Naive thymus-derived CD4-positive, alpha-beta T cell (primary cell): ENCODE measurements at regions of chr2 and their contacts with region 1.

Region 1: DNA sequence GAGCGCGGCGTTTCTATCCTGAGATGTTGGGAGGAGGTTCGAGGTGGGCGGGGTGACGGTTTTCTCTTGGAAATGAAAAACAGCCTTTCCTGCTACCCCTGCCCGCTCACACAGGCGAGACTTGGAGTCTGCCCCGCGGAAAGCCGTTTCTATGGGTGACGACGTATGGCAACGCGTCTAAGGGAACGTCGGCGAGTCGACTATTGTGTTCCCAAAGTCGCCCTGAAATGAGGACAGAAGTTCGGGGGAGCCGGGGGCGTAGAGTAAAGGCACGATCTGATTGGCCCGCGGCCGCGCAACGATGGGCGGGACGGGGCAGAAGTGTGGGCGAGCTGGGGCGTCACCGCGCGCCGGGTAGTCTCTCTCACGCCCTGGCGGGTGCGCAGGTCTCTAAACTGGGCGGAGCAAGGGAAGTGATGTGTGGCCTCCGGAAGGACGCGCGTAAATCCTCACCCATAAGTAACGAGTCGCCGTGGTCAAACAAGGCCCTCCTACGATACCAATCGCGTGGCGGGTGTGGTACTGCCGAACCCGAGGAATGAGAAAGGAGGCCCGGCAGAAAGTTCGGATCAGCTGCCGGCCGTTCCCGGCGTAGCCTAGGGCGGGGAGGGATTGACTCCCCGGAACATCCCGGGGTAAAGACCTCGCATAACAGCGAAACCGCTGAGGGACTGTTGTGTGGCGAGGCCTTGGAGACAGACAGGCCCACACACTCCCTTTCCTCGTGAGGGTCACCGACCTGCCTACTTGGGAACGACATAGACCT is 89.6 kb downstream of the FAM161A start:
- DNase-seq: peak; percentile 89 to 98 (median 97)
- ATAC-seq: peak; percentile 99
- H3K4me3 ChIP-seq: peak overlapping the region; percentile 71
- H3K4me3 Mint-ChIP-seq: peak overlapping the region; percentile 80 to 98 (median 95)
- H3K27ac ChIP-seq: peak overlapping the region; percentile 93
- H3K27ac Mint-ChIP-seq: peak overlapping the region; percentile 94 to 99 (median 98)
- H3K4me1 ChIP-seq: peaks cover 6 to 9% of the 10 kb centered on the region in 2 donors
- H3K4me1 Mint-ChIP-seq: peaks cover 0 to 16% (median 10%) of the 10 kb centered on the region in 7 donors
- H3K27me3 ChIP-seq: no peaks in the 10 kb centered on the region
- H3K27me3 Mint-ChIP-seq: peaks cover 0 to under 1% (median 0%) of the 10 kb centered on the region in 5 donors

Region 2: GRCh38 chr2:59888015-59888414 is 1876.2 kb before region 1 on chr2:
- CTCF ChIA-PET with region 1: no interaction called
- POLR2A ChIA-PET with region 1: no interaction called
- intact Hi-C with region 1: loop called in 1 of 2 experiments (anchors 5 kb)
- DNase-seq: peak in 8 of 9 donors; percentile 22 to 90 (median 86)
- ATAC-seq: peak; percentile 97
- H3K4me3 ChIP-seq: no peak overlapping the region
- H3K4me3 Mint-ChIP-seq: peak overlapping the region; percentile 3 to 85 (median 72)
- H3K27ac ChIP-seq: peak overlapping the region; percentile 54
- H3K27ac Mint-ChIP-seq: peak overlapping the region; percentile 29 to 92 (median 85)
- H3K4me1 ChIP-seq: peaks cover 0 to 38% of the 10 kb centered on the region in 2 donors
- H3K4me1 Mint-ChIP-seq: peaks cover 28 to 74% (median 57%) of the 10 kb centered on the region in 7 donors
- H3K27me3 ChIP-seq: no peaks in the 10 kb centered on the region
- H3K27me3 Mint-ChIP-seq: peaks cover 0 to 16% (median 0%) of the 10 kb centered on the region in 5 donors

Region 3: GRCh38 chr2:61065715-61066709 is 698.2 kb before region 1 on chr2 and contains the start of gene SANBR:
- CTCF ChIA-PET with region 1: no interaction called
- POLR2A ChIA-PET with region 1: no interaction called
- intact Hi-C with region 1: loop called in 1 of 2 experiments (anchors 5 kb)
- DNase-seq: peak; percentile 78 to 90 (median 83)
- ATAC-seq: peak; percentile 99
- H3K4me3 ChIP-seq: peak within 1 kb of the TSS; percentile 59
- H3K4me3 Mint-ChIP-seq: peak within 1 kb of the TSS; percentile 79 to 98 (median 95)
- H3K27ac ChIP-seq: peak within 1 kb of the TSS; percentile 49
- H3K27ac Mint-ChIP-seq: peak within 1 kb of the TSS; percentile 12 to 94 (median 79)
- H3K4me1 ChIP-seq: peaks cover 0 to 6% of the 10 kb centered on the region in 2 donors
- H3K4me1 Mint-ChIP-seq: peaks cover 0 to 17% (median 5%) of the 10 kb centered on the region in 7 donors
- H3K27me3 ChIP-seq: no peaks in the 10 kb centered on the region
- H3K27me3 Mint-ChIP-seq: peaks cover 0 to 2% (median 0%) of the 10 kb centered on the region in 5 donors
- total RNA-seq, gene SANBR: 2.0 to 5.9 (median 3.6) TPM

Region 4: GRCh38 chr2:61470965-61471904 is 293.0 kb before region 1 on chr2 and contains the start of gene USP34:
- CTCF ChIA-PET with region 1: no interaction called
- POLR2A ChIA-PET with region 1: no interaction called
- intact Hi-C with region 1: loop called (anchors 1 kb)
- DNase-seq: peak; percentile 77 to 93 (median 88)
- ATAC-seq: peak; percentile 91
- H3K4me3 ChIP-seq: peak within 1 kb of the TSS; percentile 97
- H3K4me3 Mint-ChIP-seq: peak within 1 kb of the TSS; percentile 85 to 99 (median 96)
- H3K27ac ChIP-seq: peak within 1 kb of the TSS; percentile 98
- H3K27ac Mint-ChIP-seq: peak within 1 kb of the TSS; percentile 96 to 99 (median 97)
- H3K4me1 ChIP-seq: peaks cover 14 to 27% of the 10 kb centered on the region in 2 donors
- H3K4me1 Mint-ChIP-seq: peaks cover 11 to 45% (median 33%) of the 10 kb centered on the region in 7 donors
- H3K27me3 ChIP-seq: no peaks in the 10 kb centered on the region
- H3K27me3 Mint-ChIP-seq: no peaks in the 10 kb centered on the region
- total RNA-seq, gene USP34: 109 to 186 (median 165) TPM

Region 5: DNA sequence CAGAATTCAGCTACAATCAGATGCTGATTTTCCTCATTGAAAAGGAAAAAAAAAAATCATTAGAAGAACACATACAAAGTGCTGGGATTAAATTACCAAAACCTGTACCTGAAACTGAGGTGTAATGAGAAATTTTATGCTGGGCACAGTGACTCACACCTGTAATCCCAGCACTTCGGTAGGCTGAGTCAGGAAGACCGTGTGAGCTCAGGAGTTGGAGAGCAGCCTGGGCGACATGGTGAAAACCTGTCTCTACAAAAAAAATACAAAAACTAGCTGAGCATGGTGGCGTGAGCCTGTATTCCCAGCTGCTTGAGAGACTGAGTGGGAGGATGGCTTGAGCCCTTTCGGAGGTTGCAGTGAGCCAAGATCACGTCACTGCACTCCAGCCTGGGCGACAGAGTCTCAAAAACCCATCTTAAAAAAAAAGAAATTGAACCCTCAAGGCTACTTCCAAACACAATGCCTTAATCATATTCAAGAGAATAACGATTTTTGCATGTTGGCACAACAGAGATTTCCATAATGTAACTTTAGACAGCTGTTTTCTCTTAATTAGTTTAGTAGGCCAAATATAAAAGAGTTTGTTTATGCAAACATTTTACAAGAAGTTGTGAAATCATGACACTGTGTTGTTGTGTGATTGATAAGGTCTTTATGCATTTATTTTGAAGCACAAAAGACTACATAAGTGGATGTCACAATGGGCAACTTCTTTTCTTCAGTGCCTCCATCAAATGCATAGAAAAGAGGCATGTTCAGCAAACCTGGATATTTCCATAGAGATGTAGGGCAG is 25.8 kb after region 1 on chr2:
- CTCF ChIA-PET with region 1: no interaction called
- POLR2A ChIA-PET with region 1: no interaction called
- intact Hi-C with region 1: loop called (anchors 1 kb)
- DNase-seq: no peak
- ATAC-seq: no peak
- H3K4me3 ChIP-seq: no peak overlapping the region
- H3K4me3 Mint-ChIP-seq: no peak overlapping the region
- H3K27ac ChIP-seq: no peak overlapping the region
- H3K27ac Mint-ChIP-seq: no peak overlapping the region
- H3K4me1 ChIP-seq: no peaks in the 10 kb centered on the region
- H3K4me1 Mint-ChIP-seq: peaks cover 0 to 8% (median 4%) of the 10 kb centered on the region in 7 donors
- H3K27me3 ChIP-seq: no peaks in the 10 kb centered on the region
- H3K27me3 Mint-ChIP-seq: peaks cover 3 to 17% (median 7%) of the 10 kb centered on the region in 5 donors

Region 6: DNA sequence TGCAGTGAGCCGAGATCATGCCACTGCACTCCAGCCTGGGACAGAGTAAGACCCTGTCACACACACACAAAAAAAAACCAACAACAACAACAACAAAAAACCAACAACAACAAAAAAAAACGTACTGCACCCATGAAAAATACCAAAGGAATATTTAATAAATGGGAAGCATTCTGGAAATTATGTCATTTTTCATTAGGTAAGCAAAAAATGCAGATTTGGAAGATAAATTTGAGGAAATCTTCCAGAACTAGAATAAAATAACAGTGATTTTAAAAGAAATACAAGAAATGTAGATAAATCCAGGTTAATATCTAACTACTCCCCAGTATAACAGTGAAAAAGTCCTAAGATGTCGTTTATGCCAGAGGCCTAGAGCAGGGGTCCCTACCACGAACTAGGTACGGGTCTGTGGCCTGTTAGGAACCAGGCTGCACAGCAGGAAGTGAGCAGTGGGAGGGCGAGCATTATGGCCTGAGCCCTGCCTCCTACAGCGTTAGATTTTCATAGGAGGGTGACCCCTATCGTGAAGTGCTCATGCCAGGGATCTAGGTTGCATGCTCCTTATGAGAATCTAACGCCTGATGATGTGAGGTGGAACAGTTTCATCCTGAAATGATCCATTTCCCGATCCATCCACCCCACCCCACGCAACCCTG is 68.1 kb after region 1 on chr2:
- CTCF ChIA-PET with region 1: no interaction called
- POLR2A ChIA-PET with region 1: no interaction called
- intact Hi-C with region 1: no loop called
- DNase-seq: no peak
- ATAC-seq: no peak
- H3K4me3 ChIP-seq: no peak overlapping the region
- H3K4me3 Mint-ChIP-seq: no peak overlapping the region
- H3K27ac ChIP-seq: no peak overlapping the region
- H3K27ac Mint-ChIP-seq: peak overlapping the region in 2 of 9 donors; percentile 21 to 54
- H3K4me1 ChIP-seq: no peaks in the 10 kb centered on the region
- H3K4me1 Mint-ChIP-seq: no peaks in the 10 kb centered on the region
- H3K27me3 ChIP-seq: no peaks in the 10 kb centered on the region
- H3K27me3 Mint-ChIP-seq: no peaks in the 10 kb centered on the region

Region 7: DNA sequence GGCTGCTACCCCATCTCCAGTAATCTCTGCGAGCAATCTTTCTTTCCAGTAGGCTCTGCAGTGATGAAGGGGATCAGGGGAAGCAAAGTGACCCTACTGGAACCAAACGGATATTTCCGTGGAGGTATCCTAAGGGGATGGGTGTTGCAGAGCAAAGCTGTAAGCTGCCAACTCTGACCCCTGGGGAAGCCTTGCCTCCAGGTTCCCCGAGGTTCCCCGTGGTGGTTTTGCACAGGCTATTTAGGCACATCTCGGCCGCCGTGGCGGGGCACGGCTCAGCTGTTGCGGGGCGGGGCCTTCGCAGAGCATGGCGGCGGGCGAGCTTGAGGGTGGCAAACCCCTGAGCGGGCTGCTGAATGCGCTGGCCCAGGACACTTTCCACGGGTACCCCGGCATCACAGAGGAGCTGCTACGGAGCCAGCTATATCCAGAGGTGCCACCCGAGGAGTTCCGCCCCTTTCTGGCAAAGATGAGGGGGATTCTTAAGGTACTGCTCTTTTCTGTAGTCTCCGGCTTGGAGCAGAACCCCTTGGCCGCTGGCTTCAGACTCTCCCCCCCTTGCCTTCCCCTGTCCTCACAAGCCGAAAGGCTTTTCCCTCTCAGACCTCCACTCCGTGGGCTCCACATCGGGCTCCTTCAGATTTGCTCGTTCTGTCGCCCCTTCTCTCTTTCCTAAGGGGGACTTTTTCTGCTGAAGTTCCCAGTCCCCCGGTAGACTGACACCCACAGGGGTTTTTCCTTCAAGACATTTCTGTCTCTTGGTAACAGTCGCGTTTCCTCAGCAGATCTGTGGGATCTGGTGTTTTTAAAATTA is 141.4 kb after region 1 on chr2 and contains the start of gene COMMD1:
- CTCF ChIA-PET with region 1: no interaction called
- POLR2A ChIA-PET with region 1: no interaction called
- intact Hi-C with region 1: loop called in 1 of 2 experiments (anchors 1 kb)
- DNase-seq: peak; percentile 64 to 81 (median 76)
- ATAC-seq: peak; percentile 99
- H3K4me3 ChIP-seq: peak within 1 kb of the TSS; percentile 76
- H3K4me3 Mint-ChIP-seq: peak within 1 kb of the TSS; percentile 95 to 98 (median 96)
- H3K27ac ChIP-seq: peak within 1 kb of the TSS; percentile 83
- H3K27ac Mint-ChIP-seq: peak within 1 kb of the TSS; percentile 80 to 97 (median 86)
- H3K4me1 ChIP-seq: peaks cover 0 to 12% of the 10 kb centered on the region in 2 donors
- H3K4me1 Mint-ChIP-seq: peaks cover 14 to 42% (median 30%) of the 10 kb centered on the region in 7 donors
- H3K27me3 ChIP-seq: no peaks in the 10 kb centered on the region
- H3K27me3 Mint-ChIP-seq: no peaks in the 10 kb centered on the region
- total RNA-seq, gene COMMD1: 15.6 to 28.3 (median 20.8) TPM